A549 (cell line): ENCODE measurements at regions of chr22 and their contacts with region 1.

Region 1: DNA sequence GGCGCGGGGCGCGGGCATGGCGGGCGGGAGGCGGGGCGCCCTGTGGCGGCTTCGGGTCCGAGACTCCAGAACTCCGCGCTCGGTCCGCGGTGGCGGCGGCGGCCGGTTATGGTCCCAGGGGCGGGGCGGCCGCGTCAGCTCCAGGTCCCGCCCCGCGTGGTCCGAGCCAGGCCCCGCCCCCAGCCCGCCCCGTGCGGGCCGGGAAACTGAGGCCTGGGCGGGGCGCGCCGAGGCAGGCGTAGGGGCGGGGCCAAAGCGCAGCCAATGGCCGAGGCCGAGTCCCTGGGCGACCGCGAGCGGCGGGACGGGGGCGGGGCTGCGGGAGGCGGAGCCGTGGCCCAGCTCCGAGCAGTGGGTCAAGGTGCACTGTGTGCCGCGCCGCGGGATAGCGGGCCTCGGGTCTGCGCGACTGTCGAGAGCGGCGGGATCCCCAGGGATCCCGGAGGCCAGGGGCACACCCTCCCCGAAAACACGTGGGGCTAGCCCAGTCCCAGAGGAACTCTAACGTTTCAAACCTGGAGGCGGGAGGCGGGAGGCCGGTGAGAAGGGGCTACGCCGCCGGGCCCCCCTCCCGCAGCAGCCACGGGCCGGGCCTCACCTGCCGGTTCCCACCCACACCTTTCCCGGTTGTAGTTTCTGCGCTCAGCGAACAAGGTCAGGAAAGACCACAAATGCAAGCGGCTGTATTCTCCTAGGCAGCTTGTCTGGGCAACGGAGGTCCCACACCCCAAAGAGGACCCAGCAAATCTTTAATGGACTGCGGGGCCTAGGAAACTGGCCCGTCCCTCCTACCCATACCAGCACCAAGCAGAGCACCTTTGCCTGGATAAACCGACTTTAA is at the start of gene SLC25A1:
- DNase-seq: peak; percentile 72 to 83
- ATAC-seq: peak; percentile 69 to 86
- H3K4me3 ChIP-seq: peak within 1 kb of the TSS; percentile 80
- H3K27ac ChIP-seq: peak within 1 kb of the TSS; percentile 93 to 98
- H3K4me1 ChIP-seq: peaks cover 35% of the 10 kb centered on the region
- CTCF ChIP-seq: no peak
- EP300 ChIP-seq: no peak
- POLR2A ChIP-seq: peak; percentile 59
- RAD21 ChIP-seq: no peak
- polyA plus RNA-seq, gene SLC25A1: 11.4 and 14.9 TPM in 2 replicates

Region 2: GRCh38 chr22:19143967-19144400 is 34.9 kb before region 1 on chr22:
- CTCF ChIA-PET with region 1: interaction called, 18 read pairs
- POLR2A ChIA-PET with region 1: interaction called, 3 read pairs
- DNase-seq: no peak
- ATAC-seq: peak in 1 of 2 experiments; percentile 41; a peak in 3 of 6 replicates
- H3K4me3 ChIP-seq: peak overlapping the region; percentile 97
- H3K27ac ChIP-seq: peak overlapping the region; percentile 74 to 92
- H3K4me1 ChIP-seq: peaks cover 6% of the 10 kb centered on the region; the same call in 2 of the 3 replicates
- CTCF ChIP-seq: no peak
- EP300 ChIP-seq: no peak
- POLR2A ChIP-seq: no peak
- RAD21 ChIP-seq: no peak

Region 3: DNA sequence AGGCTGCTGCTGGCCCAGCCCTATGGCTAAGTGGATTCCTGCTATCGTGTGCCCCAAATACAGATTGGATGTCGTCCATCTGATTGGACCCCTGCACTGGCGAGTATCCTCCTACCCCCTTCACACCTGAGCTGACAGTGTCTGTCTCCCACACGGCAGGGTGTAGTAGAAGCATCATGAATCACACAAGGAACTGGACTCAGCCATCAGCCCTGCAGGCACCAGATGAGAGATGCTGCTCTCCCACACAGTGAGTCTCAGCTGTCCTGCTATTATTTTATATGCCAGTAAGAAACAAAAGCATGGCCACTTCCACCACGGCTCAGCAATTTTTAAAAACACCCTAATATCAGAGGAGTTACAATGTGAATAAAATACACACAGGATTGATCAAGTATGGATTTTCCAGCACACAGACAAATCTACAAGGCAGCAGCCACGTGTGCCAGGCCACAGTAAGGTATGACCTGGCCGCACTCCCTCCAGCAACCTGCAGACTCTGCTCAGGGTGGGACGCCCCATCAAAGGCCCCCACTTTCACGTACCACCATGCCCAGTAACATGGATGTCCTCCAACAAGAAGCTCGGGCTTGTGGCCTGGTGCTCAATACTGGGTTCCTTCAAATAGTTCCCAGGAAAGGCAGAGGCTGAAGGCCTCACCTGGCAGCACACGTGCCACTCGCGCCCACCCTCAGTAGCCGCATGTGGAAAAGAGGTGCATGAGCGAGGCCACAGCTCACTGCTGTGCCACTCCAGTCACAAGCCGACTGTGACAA is 16.1 kb after region 1 on chr22:
- CTCF ChIA-PET with region 1: interaction called, 24 read pairs
- POLR2A ChIA-PET with region 1: no interaction called
- DNase-seq: no peak
- ATAC-seq: no peak
- H3K4me3 ChIP-seq: no peak overlapping the region
- H3K27ac ChIP-seq: no peak overlapping the region
- H3K4me1 ChIP-seq: no peaks in the 10 kb centered on the region
- CTCF ChIP-seq: no peak
- EP300 ChIP-seq: no peak
- POLR2A ChIP-seq: no peak
- RAD21 ChIP-seq: no peak